Activated B cell treated with CpG ODN at 0.5 μM for 24 hours (primary cell): ENCODE measurements at regions of chr17 and their contacts with region 1.

Region 1: DNA sequence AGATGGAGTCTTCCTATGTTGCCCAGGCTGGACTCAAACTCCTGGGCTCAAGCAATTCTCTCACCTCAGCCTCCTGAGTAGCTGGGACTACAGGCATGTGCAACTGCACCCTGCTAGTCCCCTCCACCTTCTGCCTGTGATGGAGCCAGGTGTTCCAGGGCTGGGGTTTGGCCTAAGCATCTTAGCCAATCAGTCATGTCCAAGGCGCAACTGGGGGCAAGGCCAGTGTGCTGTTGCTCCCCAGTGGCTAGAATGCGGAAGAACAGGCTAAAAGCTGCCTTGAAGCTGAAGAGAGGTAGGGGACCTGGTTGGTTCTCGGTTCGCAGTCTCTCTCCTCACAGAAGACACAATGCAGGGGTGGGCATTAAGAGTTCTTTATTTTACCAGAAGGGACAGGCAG is 18.6 kb downstream of the FLOT2 start:
- DNase-seq: no peak
- ATAC-seq: peak; percentile 64
- H3K4me3 Mint-ChIP-seq: no peak overlapping the region
- H3K27ac Mint-ChIP-seq: no peak overlapping the region
- H3K4me1 Mint-ChIP-seq: peaks cover 8% of the 10 kb centered on the region
- H3K27me3 Mint-ChIP-seq: no peaks in the 10 kb centered on the region
- CTCF ChIP-seq: no peak

Region 2: DNA sequence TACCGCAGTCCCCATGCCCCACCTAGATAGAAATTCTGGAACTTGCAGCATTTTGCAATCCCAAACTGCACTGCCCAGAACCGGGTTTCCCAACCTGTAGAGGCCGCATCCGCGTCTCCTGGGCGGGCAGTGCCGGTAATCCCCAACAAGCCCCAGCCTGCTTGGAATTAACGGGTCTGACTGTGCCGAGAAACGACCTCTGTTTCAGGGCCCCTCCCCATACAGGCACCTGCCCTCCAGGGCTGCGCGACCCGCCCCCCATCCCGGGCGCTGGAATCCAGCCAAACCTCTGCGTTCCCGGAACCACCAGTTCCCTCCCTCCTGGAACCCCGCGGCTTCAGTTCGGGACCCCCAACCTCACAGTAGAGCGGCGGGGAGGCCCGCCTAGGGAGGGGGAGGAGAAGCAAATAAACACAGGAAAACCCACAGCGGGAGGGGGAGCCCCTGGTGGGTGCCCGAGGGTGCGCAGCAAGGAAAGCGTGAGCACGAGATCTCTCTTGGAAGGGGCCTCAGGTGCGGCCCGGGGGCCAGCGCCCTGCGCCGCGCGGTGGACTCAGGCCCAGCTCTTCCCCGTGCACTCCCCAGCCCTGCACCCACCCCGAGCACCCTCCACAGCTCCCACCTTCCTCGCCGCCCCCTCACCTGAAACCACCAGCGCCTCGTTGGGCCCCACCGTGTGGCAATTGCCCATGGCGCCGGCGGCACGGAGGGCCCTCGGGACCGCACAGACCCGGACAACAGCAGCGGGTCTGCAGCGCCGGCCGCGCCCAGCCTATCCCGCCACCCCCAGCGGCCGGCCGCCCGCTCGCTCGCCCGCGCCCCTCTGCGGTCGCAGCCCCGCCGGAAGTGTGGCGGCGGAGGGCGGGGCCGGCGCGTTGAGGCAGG is 18.1 kb after region 1 on chr17 and contains the start of gene FLOT2:
- CTCF ChIA-PET with region 1: no interaction called
- POLR2A ChIA-PET with region 1: interaction called, 11 read pairs
- intact Hi-C with region 1: no loop called
- DNase-seq: peak; percentile 66
- ATAC-seq: peak; percentile 58
- H3K4me3 Mint-ChIP-seq: peak within 1 kb of the TSS; percentile 96
- H3K27ac Mint-ChIP-seq: peak within 1 kb of the TSS; percentile 86
- H3K4me1 Mint-ChIP-seq: peaks cover 81% of the 10 kb centered on the region
- H3K27me3 Mint-ChIP-seq: no peaks in the 10 kb centered on the region
- CTCF ChIP-seq: no peak
- total RNA-seq, gene FLOT2: 303 and 321 TPM in 2 replicates

Region 3: GRCh38 chr17:29039764-29040598 is 161.0 kb after region 1 on chr17:
- CTCF ChIA-PET with region 1: no interaction called
- POLR2A ChIA-PET with region 1: no interaction called
- intact Hi-C with region 1: no loop called
- DNase-seq: no peak
- ATAC-seq: no peak
- H3K4me3 Mint-ChIP-seq: no peak overlapping the region
- H3K27ac Mint-ChIP-seq: no peak overlapping the region
- H3K4me1 Mint-ChIP-seq: peaks cover 25% of the 10 kb centered on the region
- H3K27me3 Mint-ChIP-seq: peaks cover 10% of the 10 kb centered on the region
- CTCF ChIP-seq: no peak